Caco-2 (cell line): ENCODE measurements at regions of chr3 and their contacts with region 1.

Region 1: GRCh38 chr3:42600111-42600988 is at the start of gene NKTR:
- DNase-seq: peak; percentile 99
- H3K4me3 ChIP-seq: peak within 1 kb of the TSS; percentile 84
- H3K4me3 Mint-ChIP-seq: peak within 1 kb of the TSS; percentile 93
- H3K27ac Mint-ChIP-seq: peak within 1 kb of the TSS; percentile 87
- H3K4me1 ChIP-seq: peaks cover 17% of the 10 kb centered on the region; the same call in 1 of the 2 replicates
- H3K4me1 Mint-ChIP-seq: peaks cover 10% of the 10 kb centered on the region
- H3K27me3 ChIP-seq: no peaks in the 10 kb centered on the region
- H3K27me3 Mint-ChIP-seq: no peaks in the 10 kb centered on the region
- CTCF ChIP-seq: peak in 1 of 2 experiments; percentile 15
- total RNA-seq, gene NKTR: 66.6 and 67.9 TPM in 2 replicates

Region 2: DNA sequence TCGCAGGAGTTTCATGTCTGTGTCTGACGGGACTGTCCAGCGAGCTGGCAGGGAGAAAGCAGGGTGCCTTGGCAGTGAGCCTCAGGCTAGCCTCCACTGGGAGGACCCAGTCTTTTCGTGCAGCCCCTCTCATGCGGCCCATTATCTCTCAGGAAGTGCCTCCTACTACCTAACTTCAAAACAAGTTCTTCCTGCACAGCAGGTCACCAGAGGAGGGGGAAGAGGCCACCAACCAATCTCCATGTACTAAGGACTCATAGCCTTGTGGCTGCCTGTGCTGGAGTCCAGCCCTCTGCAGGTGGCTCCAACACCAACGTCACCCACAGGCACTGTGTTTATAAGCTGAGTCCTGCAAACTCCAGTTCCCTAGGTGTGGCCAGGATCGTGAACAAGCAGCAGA is 93.1 kb before region 1 on chr3:
- CTCF ChIA-PET with region 1: no interaction called
- POLR2A ChIA-PET with region 1: no interaction called
- intact Hi-C with region 1: no loop called
- DNase-seq: peak; percentile 59 to 72
- H3K4me3 ChIP-seq: no peak overlapping the region
- H3K4me3 Mint-ChIP-seq: no peak overlapping the region
- H3K27ac Mint-ChIP-seq: peak overlapping the region; percentile 64
- H3K4me1 ChIP-seq: peaks cover 42% of the 10 kb centered on the region
- H3K4me1 Mint-ChIP-seq: peaks cover 27% of the 10 kb centered on the region
- H3K27me3 ChIP-seq: no peaks in the 10 kb centered on the region
- H3K27me3 Mint-ChIP-seq: no peaks in the 10 kb centered on the region
- CTCF ChIP-seq: peak in 1 of 2 experiments; percentile 13

Region 3: GRCh38 chr3:42652611-42653302 is 52.4 kb after region 1 on chr3:
- CTCF ChIA-PET with region 1: no interaction called
- POLR2A ChIA-PET with region 1: no interaction called
- intact Hi-C with region 1: loop called (anchors 5 kb)
- DNase-seq: no peak
- H3K4me3 ChIP-seq: peak overlapping the region; percentile 79; the same call in 1 of the 2 replicates
- H3K4me3 Mint-ChIP-seq: peak overlapping the region; percentile 86
- H3K27ac Mint-ChIP-seq: peak overlapping the region; percentile 73
- H3K4me1 ChIP-seq: peaks cover 19% of the 10 kb centered on the region
- H3K4me1 Mint-ChIP-seq: no peaks in the 10 kb centered on the region
- H3K27me3 ChIP-seq: no peaks in the 10 kb centered on the region
- H3K27me3 Mint-ChIP-seq: no peaks in the 10 kb centered on the region
- CTCF ChIP-seq: no peak

Region 4: DNA sequence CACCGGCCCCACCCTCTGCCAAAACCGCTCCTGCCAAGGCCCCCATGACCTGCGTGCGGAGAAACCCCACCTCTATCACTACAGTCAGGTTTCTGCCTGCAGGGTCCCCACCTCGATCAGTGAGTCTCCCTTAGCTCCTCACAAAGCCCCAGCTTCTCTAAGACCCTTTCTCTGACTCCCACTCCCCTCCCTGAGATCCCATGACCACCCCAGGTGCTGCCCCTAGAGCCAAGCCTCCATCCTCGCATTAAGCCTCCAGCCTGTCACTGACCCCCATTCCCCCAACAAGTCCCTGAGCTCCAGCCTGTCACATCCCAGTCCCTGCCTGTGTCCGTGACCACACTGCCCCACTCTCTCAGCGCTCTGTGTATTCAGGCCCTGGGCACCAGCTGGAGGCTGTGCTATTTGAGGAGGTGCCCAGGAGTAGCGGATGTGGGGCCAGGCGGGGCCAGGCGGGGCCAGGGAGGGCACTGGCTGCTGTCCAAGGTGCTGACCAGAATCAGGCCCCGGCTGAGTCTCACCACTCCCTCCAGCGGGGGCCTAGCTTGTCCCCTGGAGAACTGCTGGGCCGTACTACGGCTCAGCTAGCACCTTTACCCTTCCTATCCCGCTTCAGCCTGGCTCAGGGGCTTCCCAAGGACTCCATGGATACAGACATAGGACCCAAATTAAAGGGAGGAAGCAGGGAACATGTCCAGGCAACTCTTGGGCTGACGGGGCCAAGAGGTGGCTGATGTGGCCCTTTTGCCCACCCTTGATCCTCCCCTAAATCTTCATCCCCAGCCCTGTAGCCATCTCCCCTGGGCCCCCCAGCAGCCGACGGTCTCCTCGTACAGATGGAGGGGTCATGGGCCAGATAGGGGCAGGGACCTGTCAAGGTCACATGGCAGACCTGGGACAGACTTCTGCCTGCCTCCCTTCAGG is 101.1 kb after region 1 on chr3:
- CTCF ChIA-PET with region 1: no interaction called
- POLR2A ChIA-PET with region 1: no interaction called
- intact Hi-C with region 1: no loop called
- DNase-seq: peak; percentile 53 to 70
- H3K4me3 ChIP-seq: no peak overlapping the region
- H3K4me3 Mint-ChIP-seq: no peak overlapping the region
- H3K27ac Mint-ChIP-seq: no peak overlapping the region
- H3K4me1 ChIP-seq: no peaks in the 10 kb centered on the region
- H3K4me1 Mint-ChIP-seq: no peaks in the 10 kb centered on the region
- H3K27me3 ChIP-seq: no peaks in the 10 kb centered on the region
- H3K27me3 Mint-ChIP-seq: peaks cover 5% of the 10 kb centered on the region
- CTCF ChIP-seq: no peak

Region 5: GRCh38 chr3:42906070-42906847 is 305.9 kb after region 1 on chr3 and contains the start of gene ZNF662:
- CTCF ChIA-PET with region 1: no interaction called
- POLR2A ChIA-PET with region 1: no interaction called
- intact Hi-C with region 1: no loop called
- DNase-seq: peak; percentile 48 to 58
- H3K4me3 ChIP-seq: peak within 1 kb of the TSS; percentile 60
- H3K4me3 Mint-ChIP-seq: peak within 1 kb of the TSS; percentile 74
- H3K27ac Mint-ChIP-seq: peak within 1 kb of the TSS; percentile 30
- H3K4me1 ChIP-seq: peaks cover 5% of the 10 kb centered on the region; the same call in 1 of the 2 replicates
- H3K4me1 Mint-ChIP-seq: peaks cover 10% of the 10 kb centered on the region
- H3K27me3 ChIP-seq: no peaks in the 10 kb centered on the region
- H3K27me3 Mint-ChIP-seq: peaks cover 11% of the 10 kb centered on the region
- CTCF ChIP-seq: no peak
- total RNA-seq, gene ZNF662: 10.3 and 13.4 TPM in 2 replicates